ENCODE measurements at regions of chr14 and their contacts with region 1.

Region 1: GRCh38 chr14:99884834-99885648 is 91.8 kb downstream of the EML1 start:
- DNase-seq: peak; percentile 70
- H3K4me3 ChIP-seq: no peak overlapping the region
- H3K27ac ChIP-seq: no peak overlapping the region
- H3K4me1 ChIP-seq: no peaks in the 10 kb centered on the region
- H3K27me3 ChIP-seq: no peaks in the 10 kb centered on the region
- CTCF ChIP-seq: peak; percentile 44 to 57
- POLR2A ChIP-seq: no peak

Region 2: GRCh38 chr14:99518441-99519346 is 366.3 kb before region 1 on chr14:
- CTCF ChIA-PET with region 1: no interaction called
- POLR2A ChIA-PET with region 1: no interaction called
- dilution Hi-C with region 1: no loop called
- intact Hi-C with region 1: loop called (anchors 1 kb)
- DNase-seq: peak; percentile 55
- H3K4me3 ChIP-seq: no peak overlapping the region
- H3K27ac ChIP-seq: no peak overlapping the region
- H3K4me1 ChIP-seq: peaks cover 9% of the 10 kb centered on the region
- H3K27me3 ChIP-seq: no peaks in the 10 kb centered on the region
- CTCF ChIP-seq: peak; percentile 94 to 97
- POLR2A ChIP-seq: no peak

Region 3: GRCh38 chr14:99793213-99794150 is 91.6 kb before region 1 on chr14 and contains the start of gene EML1:
- CTCF ChIA-PET with region 1: interaction called, 4 read pairs
- POLR2A ChIA-PET with region 1: interaction called, 3 read pairs
- dilution Hi-C with region 1: no loop called
- intact Hi-C with region 1: loop called (anchors 5 kb)
- DNase-seq: peak; percentile 64
- H3K4me3 ChIP-seq: peak within 1 kb of the TSS; percentile 35 to 91 (median 65)
- H3K27ac ChIP-seq: peak within 1 kb of the TSS; percentile 15
- H3K4me1 ChIP-seq: peaks cover 20% of the 10 kb centered on the region
- H3K27me3 ChIP-seq: no peaks in the 10 kb centered on the region
- CTCF ChIP-seq: no peak
- POLR2A ChIP-seq: peak; percentile 56
- total RNA-seq, gene EML1: 33.0 and 47.8 TPM in 2 replicates

Region 4: GRCh38 chr14:99809360-99809759 is 75.7 kb before region 1 on chr14:
- CTCF ChIA-PET with region 1: no interaction called
- POLR2A ChIA-PET with region 1: no interaction called
- dilution Hi-C with region 1: no loop called
- intact Hi-C with region 1: no loop called
- DNase-seq: no peak
- H3K4me3 ChIP-seq: no peak overlapping the region
- H3K27ac ChIP-seq: no peak overlapping the region
- H3K4me1 ChIP-seq: no peaks in the 10 kb centered on the region
- H3K27me3 ChIP-seq: no peaks in the 10 kb centered on the region
- CTCF ChIP-seq: no peak
- POLR2A ChIP-seq: no peak

Region 5: GRCh38 chr14:99853206-99853605 is 31.8 kb before region 1 on chr14:
- CTCF ChIA-PET with region 1: no interaction called
- POLR2A ChIA-PET with region 1: no interaction called
- dilution Hi-C with region 1: no loop called
- intact Hi-C with region 1: no loop called
- DNase-seq: no peak
- H3K4me3 ChIP-seq: no peak overlapping the region
- H3K27ac ChIP-seq: no peak overlapping the region
- H3K4me1 ChIP-seq: no peaks in the 10 kb centered on the region
- H3K27me3 ChIP-seq: no peaks in the 10 kb centered on the region
- CTCF ChIP-seq: no peak
- POLR2A ChIP-seq: no peak

Region 6: DNA sequence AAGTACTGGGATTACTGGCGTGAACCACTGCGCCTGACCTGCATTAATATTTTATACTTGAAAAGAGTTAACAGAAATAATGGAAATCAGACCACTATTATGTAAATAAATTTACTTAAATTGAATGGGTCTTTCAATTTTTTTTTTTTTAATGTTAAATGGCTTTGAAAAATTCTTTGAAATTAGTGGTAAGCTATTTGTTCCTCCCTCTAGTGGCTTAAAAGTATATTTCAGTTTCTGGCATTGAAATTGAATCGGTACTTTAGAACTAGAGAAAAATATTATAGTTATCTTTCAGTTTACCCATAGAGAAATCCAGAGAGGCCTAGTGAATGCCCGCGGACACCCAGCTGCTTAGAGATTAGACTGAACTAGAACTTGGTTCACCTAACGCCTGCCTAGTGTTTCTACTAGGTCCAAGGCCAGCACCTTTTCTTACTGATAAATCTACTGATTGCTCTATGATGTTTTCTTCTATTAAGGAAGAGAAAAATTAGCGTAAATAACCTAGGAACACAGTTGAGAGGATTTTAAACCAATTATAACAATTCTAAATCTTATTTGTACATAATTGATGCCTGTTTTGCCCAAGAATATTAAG is 14.6 kb after region 1 on chr14:
- CTCF ChIA-PET with region 1: interaction called, 34 read pairs
- POLR2A ChIA-PET with region 1: no interaction called
- dilution Hi-C with region 1: no loop called
- intact Hi-C with region 1: no loop called
- DNase-seq: peak; percentile 45
- H3K4me3 ChIP-seq: no peak overlapping the region
- H3K27ac ChIP-seq: no peak overlapping the region
- H3K4me1 ChIP-seq: no peaks in the 10 kb centered on the region
- H3K27me3 ChIP-seq: no peaks in the 10 kb centered on the region
- CTCF ChIP-seq: peak; percentile 21 to 29
- POLR2A ChIP-seq: no peak